GM13976 (cell line): ENCODE measurements at regions of chr1 and their contacts with region 1.

Region 1: GRCh38 chr1:42924082-42924850 is 34.4 kb downstream of the SLC2A1 start:
- DNase-seq: peak; percentile 95
- CTCF ChIP-seq: no peak

Region 2: GRCh38 chr1:42873670-42874069 is 50.6 kb before region 1 on chr1:
- in situ Hi-C with region 1: no loop called
- DNase-seq: no peak
- CTCF ChIP-seq: no peak

Region 3: DNA sequence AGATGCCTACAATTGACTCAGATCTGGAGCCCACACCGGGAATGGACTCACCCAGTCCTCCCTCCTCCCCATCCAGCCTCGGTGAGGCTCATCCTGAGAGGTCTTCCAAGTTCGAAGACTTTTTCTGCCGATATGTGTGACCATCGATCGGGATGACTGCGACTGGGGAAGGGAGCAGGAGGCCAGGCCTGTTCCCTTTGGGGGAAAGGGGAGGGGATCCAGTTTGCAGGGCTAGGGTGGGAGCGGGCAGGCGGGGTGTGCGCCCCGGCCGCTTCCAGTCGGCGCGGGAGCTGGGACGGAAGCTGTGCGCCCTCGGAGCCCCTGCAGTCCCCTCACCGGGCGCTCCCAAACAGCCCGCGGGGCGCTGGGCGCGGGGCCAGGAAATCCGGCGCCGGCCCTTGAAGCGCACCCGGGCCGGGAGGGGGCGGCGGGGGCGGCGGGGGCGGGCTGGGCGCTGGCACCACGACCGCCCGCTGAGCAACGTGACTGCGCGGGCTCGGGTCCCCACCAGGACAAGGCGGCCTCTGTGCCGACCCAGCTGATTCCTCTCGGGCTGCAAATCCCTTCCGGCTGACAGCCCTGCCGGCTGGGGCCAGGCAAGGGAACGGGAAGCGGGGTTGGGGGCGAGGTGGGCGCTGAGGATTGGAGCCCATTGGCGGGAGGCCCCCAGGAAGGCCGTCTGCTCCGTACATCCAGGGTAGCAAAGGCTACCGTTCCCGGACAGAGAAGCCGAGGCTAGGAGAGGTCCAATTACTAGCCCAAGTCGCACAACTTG is 143.9 kb after region 1 on chr1:
- in situ Hi-C with region 1: loop called (anchors 5 kb)
- DNase-seq: no peak
- CTCF ChIP-seq: no peak